ENCODE measurements at regions of chr4 and their contacts with region 1.

Region 1: GRCh38 chr4:27057662-27058061 is 197.0 kb downstream of the STIM2 start:
- DNase-seq: no peak
- H3K4me3 ChIP-seq: no peak overlapping the region
- H3K4me3 Mint-ChIP-seq: no peak overlapping the region
- H3K27ac ChIP-seq: no peak overlapping the region
- H3K27ac Mint-ChIP-seq: no peak overlapping the region
- H3K4me1 ChIP-seq: no peaks in the 10 kb centered on the region
- H3K4me1 Mint-ChIP-seq: peaks cover 2% of the 10 kb centered on the region
- H3K27me3 ChIP-seq: peaks cover 0 to 12% of the 10 kb centered on the region in 2 donors
- H3K27me3 Mint-ChIP-seq: peaks cover 17 to 30% (median 26%) of the 10 kb centered on the region in 3 donors
- CTCF ChIP-seq: no peak

Region 2: DNA sequence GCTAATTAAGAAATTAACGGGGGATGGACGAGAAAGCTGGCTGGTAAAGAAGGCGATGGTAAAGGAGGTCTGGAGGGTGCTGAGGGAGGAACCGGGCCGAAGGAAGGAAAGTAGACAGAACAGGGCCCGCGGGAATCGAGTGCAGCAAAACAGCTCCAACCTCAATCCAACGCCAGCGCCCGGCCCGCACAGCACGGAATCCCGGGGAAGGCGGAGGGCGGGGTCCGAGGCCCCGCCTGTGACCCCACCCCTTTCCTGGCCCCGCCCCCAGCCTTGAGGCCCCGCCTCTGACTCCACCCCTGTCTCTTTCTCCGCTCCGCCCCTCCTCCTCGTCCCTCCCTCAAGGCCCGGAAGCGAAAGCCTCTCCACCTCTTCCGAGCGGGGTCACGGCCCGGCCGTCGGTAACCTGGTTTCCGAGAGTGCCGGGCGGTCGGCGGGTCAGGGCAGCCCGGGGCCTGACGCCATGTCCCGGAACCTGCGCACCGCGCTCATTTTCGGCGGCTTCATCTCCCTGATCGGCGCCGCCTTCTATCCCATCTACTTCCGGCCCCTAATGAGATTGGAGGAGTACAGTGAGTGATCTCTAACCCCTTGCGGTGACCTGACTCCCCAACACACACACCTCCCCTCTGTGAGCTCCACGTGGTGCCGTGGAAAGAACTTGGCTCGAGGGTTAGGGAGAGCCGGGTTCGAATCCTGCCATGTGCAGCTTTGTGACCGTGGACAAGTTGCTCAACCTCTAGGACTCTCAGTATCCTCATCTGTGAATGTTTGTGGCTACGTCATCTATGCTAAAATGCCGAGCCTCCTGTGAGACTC is 1143.6 kb before region 1 on chr4 and contains the start of gene SMIM20:
- intact Hi-C with region 1: no loop called
- DNase-seq: peak; percentile 79 to 89 (median 86)
- H3K4me3 ChIP-seq: peak within 1 kb of the TSS; percentile 74 to 91 (median 74)
- H3K4me3 Mint-ChIP-seq: peak within 1 kb of the TSS; percentile 97
- H3K27ac ChIP-seq: peak within 1 kb of the TSS; percentile 86 to 92
- H3K27ac Mint-ChIP-seq: peak within 1 kb of the TSS; percentile 94 to 98 (median 97)
- H3K4me1 ChIP-seq: peaks cover 18% of the 10 kb centered on the region in 2 donors
- H3K4me1 Mint-ChIP-seq: peaks cover 25% of the 10 kb centered on the region
- H3K27me3 ChIP-seq: no peaks in the 10 kb centered on the region
- H3K27me3 Mint-ChIP-seq: peaks cover 3 to 6% (median 4%) of the 10 kb centered on the region in 3 donors
- CTCF ChIP-seq: no peak
- polyA plus RNA-seq, gene SMIM20: 10.4 to 38.1 (median 33.7) TPM

Region 3: DNA sequence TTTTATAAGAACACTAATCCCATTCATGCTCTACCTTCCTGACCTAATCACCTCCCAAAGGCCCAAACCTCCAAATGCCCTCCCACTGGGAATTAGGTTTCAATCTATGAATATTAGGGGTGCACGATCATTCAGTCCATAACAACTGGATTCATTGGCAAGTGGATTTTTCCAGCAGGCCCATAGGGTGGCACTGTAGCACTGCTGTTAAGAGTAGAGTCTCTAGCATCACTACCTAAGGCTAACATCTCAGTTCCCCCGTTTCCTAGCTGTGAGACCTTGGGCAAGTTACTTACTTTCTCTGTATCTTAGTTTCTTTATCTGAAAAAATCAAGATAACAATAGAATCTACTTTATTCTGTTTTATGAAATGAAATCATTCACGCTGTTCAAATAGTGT is 118.7 kb after region 1 on chr4:
- intact Hi-C with region 1: no loop called
- DNase-seq: no peak
- H3K4me3 ChIP-seq: no peak overlapping the region
- H3K4me3 Mint-ChIP-seq: no peak overlapping the region
- H3K27ac ChIP-seq: no peak overlapping the region
- H3K27ac Mint-ChIP-seq: no peak overlapping the region
- H3K4me1 ChIP-seq: no peaks in the 10 kb centered on the region
- H3K4me1 Mint-ChIP-seq: no peaks in the 10 kb centered on the region
- H3K27me3 ChIP-seq: no peaks in the 10 kb centered on the region
- H3K27me3 Mint-ChIP-seq: peaks cover 0 to 4% (median 2%) of the 10 kb centered on the region in 3 donors
- CTCF ChIP-seq: no peak

Region 4: DNA sequence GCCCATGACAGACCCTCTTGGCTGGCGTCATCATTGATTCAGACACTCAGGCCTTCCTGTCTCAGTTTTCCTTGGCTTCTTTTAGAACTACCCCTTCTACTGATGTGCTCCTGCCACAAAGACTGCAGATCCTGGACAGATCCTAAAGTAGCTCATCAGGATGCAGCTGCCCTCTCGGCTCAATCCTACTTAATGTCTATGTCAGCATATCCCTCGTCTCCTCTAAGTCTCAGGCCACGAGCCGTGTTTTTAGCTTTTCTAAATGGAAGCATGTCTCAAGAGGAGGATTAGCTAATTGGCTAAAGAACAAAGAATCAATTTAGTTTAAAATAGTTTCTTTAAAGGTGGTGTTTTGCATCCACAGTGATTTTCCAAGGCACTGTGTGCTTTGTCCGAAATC is 250.7 kb after region 1 on chr4:
- intact Hi-C with region 1: loop called in 1 of 2 experiments (anchors 10 kb)
- DNase-seq: no peak
- H3K4me3 ChIP-seq: no peak overlapping the region
- H3K4me3 Mint-ChIP-seq: no peak overlapping the region
- H3K27ac ChIP-seq: no peak overlapping the region
- H3K27ac Mint-ChIP-seq: no peak overlapping the region
- H3K4me1 ChIP-seq: no peaks in the 10 kb centered on the region
- H3K4me1 Mint-ChIP-seq: no peaks in the 10 kb centered on the region
- H3K27me3 ChIP-seq: no peaks in the 10 kb centered on the region
- H3K27me3 Mint-ChIP-seq: no peaks in the 10 kb centered on the region
- CTCF ChIP-seq: no peak

Measured in CD14-positive monocyte (primary cell).